ENCODE measurements at regions of chr12 and their contacts with region 1.

Region 1: GRCh38 chr12:106919910-106920544 is 35.7 kb upstream of the TMEM263 start:
- DNase-seq: no peak
- H3K4me3 Mint-ChIP-seq: no peak overlapping the region
- H3K27ac Mint-ChIP-seq: no peak overlapping the region
- H3K4me1 Mint-ChIP-seq: peaks cover 9% of the 10 kb centered on the region
- H3K27me3 Mint-ChIP-seq: peaks cover 11% of the 10 kb centered on the region

Region 2: GRCh38 chr12:106386813-106387535 is 533.1 kb before region 1 on chr12:
- intact Hi-C with region 1: loop called (anchors 1 kb)
- DNase-seq: no peak
- H3K4me3 Mint-ChIP-seq: no peak overlapping the region
- H3K27ac Mint-ChIP-seq: no peak overlapping the region
- H3K4me1 Mint-ChIP-seq: no peaks in the 10 kb centered on the region
- H3K27me3 Mint-ChIP-seq: no peaks in the 10 kb centered on the region

Region 3: DNA sequence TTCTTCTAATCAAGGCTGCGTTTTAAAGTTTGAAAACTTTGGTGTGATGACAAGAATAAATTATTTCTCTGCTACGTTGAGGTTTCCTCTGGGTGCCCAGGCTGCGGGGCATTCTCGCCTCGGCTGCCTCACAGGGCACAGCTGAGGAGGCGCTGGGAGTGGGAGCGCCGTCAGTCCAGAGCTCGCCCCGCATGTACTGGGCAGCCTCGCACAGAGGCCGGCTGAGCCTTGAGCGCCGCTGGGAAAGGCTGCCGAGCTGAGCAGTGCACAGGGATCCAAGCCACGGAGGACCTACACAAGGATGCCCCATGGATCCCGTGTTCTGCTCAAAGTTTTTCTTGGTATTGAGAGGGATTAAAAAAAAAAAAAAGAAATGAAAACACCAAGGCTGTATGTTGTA is 325.6 kb before region 1 on chr12:
- intact Hi-C with region 1: loop called (anchors 5 kb)
- DNase-seq: no peak
- H3K4me3 Mint-ChIP-seq: no peak overlapping the region
- H3K27ac Mint-ChIP-seq: no peak overlapping the region
- H3K4me1 Mint-ChIP-seq: no peaks in the 10 kb centered on the region
- H3K27me3 Mint-ChIP-seq: peaks cover 44% of the 10 kb centered on the region

Region 4: GRCh38 chr12:106729611-106730010 is 190.4 kb before region 1 on chr12:
- intact Hi-C with region 1: loop called (anchors 5 kb)
- DNase-seq: no peak
- H3K4me3 Mint-ChIP-seq: no peak overlapping the region
- H3K27ac Mint-ChIP-seq: no peak overlapping the region
- H3K4me1 Mint-ChIP-seq: no peaks in the 10 kb centered on the region
- H3K27me3 Mint-ChIP-seq: no peaks in the 10 kb centered on the region

Region 5: GRCh38 chr12:106955377-106956047 is 35.5 kb after region 1 on chr12 and contains the start of gene TMEM263:
- intact Hi-C with region 1: loop called (anchors 2 kb)
- DNase-seq: peak; percentile 90
- H3K4me3 Mint-ChIP-seq: peak within 1 kb of the TSS; percentile 97
- H3K27ac Mint-ChIP-seq: peak within 1 kb of the TSS; percentile 94
- H3K4me1 Mint-ChIP-seq: peaks cover 21% of the 10 kb centered on the region
- H3K27me3 Mint-ChIP-seq: peaks cover 3% of the 10 kb centered on the region
- total RNA-seq, gene TMEM263: 25.5 and 25.9 TPM in 2 replicates

Region 6: DNA sequence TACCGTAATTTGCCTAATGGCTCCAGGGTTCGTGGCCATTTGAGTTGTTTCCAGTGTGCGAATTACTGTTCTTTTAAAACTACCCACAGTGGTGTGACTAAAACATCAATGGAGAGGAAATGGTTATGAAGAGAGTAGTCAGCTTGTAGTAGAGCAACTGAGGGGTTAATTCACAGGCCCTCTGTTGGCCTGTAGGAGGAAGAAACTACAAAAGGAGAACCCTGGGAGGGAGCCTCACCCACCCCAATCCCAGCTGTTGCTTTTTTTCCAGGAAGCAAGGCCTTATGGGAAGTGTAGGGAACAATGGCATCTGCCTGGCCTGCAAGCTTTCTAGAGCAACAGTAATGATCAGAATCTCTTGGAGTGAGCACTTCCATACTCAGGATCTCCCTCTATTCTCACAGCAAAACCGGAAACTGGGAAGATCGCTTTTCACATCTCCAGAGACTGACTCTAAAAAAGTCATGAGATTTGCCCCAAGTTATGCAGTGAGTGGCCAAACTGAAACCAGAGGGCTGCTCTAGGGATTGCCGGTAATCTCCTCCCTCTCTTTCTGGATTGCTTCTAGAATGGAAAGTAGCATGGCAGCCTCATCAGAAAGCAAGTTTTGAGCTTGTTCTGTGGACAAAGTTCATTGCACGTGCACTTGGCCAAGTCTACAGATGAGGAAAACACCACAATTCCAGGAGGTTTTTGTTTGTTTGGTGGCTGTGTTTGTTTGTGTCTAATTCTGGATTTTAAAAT is 640.3 kb after region 1 on chr12:
- intact Hi-C with region 1: no loop called
- DNase-seq: no peak
- H3K4me3 Mint-ChIP-seq: no peak overlapping the region
- H3K27ac Mint-ChIP-seq: no peak overlapping the region
- H3K4me1 Mint-ChIP-seq: peaks cover 8% of the 10 kb centered on the region
- H3K27me3 Mint-ChIP-seq: no peaks in the 10 kb centered on the region

Measured in activated T-helper 1 cell treated with anti-CD3 and anti-CD28 coated beads, Interleukin-12 subunit alpha, Interleukin-12 subunit beta, Interleukin-2, Interleukin-4 antibody, amounts not matched to agents 30 ng/mL and 10 ng/mL and 1 ng/mL, durations not matched to agents 14 hours and 24 hours and 36 hours (primary cell).